Transverse colon (tissue), 4 donors: ENCODE measurements at regions of chr18 and their contacts with region 1.

Region 1: GRCh38 chr18:63099848-63100629 is 219.5 kb downstream of the BCL2 start:
- DNase-seq: peak; percentile 73
- H3K4me3 ChIP-seq: no peak overlapping the region
- H3K27ac ChIP-seq: peak overlapping the region; percentile 58 to 72 (median 64)
- H3K4me1 ChIP-seq: peaks cover 4 to 33% (median 15%) of the 10 kb centered on the region in 4 donors
- H3K27me3 ChIP-seq: no peaks in the 10 kb centered on the region
- CTCF ChIP-seq: no peak
- EP300 ChIP-seq: no peak
- POLR2A ChIP-seq: peak; percentile 50

Region 2: GRCh38 chr18:62584241-62585120 is 515.6 kb before region 1 on chr18:
- in situ Hi-C with region 1: no loop called
- intact Hi-C with region 1: no loop called
- DNase-seq: peak; percentile 88
- H3K4me3 ChIP-seq: no peak overlapping the region
- H3K27ac ChIP-seq: peak overlapping the region; percentile 3 to 45 (median 14)
- H3K4me1 ChIP-seq: peaks cover 4 to 22% (median 5%) of the 10 kb centered on the region in 4 donors
- H3K27me3 ChIP-seq: no peaks in the 10 kb centered on the region
- CTCF ChIP-seq: peak; percentile 97 to 100 (median 98)
- EP300 ChIP-seq: no peak
- POLR2A ChIP-seq: no peak

Region 3: GRCh38 chr18:62741118-62741566 is 358.9 kb before region 1 on chr18:
- in situ Hi-C with region 1: no loop called
- intact Hi-C with region 1: loop called (anchors 5 kb)
- DNase-seq: peak; percentile 42
- H3K4me3 ChIP-seq: peak overlapping the region in 1 of 4 donors; percentile 14
- H3K27ac ChIP-seq: peak overlapping the region; percentile 74 to 85 (median 78)
- H3K4me1 ChIP-seq: peaks cover 6 to 64% (median 49%) of the 10 kb centered on the region in 4 donors
- H3K27me3 ChIP-seq: no peaks in the 10 kb centered on the region
- CTCF ChIP-seq: no peak
- EP300 ChIP-seq: no peak
- POLR2A ChIP-seq: no peak

Region 4: DNA sequence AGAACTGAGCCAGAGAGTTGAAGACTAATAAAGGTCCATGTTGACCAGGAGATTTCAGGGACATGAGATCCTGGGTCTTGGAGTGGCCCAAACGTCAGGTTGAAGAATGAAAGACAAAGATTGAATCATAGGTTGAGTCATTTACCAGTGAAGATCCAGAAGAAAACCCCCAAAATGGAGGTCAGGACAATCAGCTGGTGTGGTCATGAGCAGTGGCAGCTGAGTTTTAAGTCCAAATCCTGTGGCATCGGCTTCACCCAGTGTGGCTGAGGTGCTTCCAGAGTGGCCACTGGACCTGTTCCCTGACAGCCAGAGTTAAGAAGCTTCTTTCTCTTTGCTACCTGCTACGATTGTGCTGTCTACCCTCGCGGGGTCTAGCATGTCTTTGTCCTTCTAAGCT is 14.4 kb before region 1 on chr18:
- in situ Hi-C with region 1: no loop called
- intact Hi-C with region 1: loop called (anchors 1 kb)
- DNase-seq: no peak
- H3K4me3 ChIP-seq: no peak overlapping the region
- H3K27ac ChIP-seq: no peak overlapping the region
- H3K4me1 ChIP-seq: no peaks in the 10 kb centered on the region
- H3K27me3 ChIP-seq: no peaks in the 10 kb centered on the region
- CTCF ChIP-seq: no peak
- EP300 ChIP-seq: no peak
- POLR2A ChIP-seq: no peak

Region 5: DNA sequence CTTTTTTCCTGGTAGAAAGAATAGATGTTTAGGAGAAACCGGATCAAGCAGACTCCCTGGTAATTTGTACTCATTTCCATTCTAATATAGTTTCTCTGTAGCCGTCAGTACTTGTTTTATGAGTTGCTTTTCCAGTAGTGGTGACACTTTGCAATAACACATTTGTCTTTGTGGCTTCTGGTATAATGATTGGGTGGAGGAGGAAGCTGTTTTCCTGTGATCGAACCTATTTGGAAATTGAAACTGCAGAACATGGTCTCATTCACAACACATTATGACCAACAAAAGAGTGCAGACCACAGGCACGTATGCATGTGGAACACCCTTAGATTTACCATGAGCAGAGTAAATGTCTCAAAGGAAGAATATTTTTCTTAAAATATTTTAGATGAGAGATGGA is 434.6 kb after region 1 on chr18:
- in situ Hi-C with region 1: no loop called
- intact Hi-C with region 1: no loop called
- DNase-seq: no peak
- H3K4me3 ChIP-seq: no peak overlapping the region
- H3K27ac ChIP-seq: no peak overlapping the region
- H3K4me1 ChIP-seq: no peaks in the 10 kb centered on the region
- H3K27me3 ChIP-seq: no peaks in the 10 kb centered on the region
- CTCF ChIP-seq: no peak
- EP300 ChIP-seq: no peak
- POLR2A ChIP-seq: no peak